ENCODE measurements at regions of chr16 and their contacts with region 1.

Region 1: GRCh38 chr16:57300387-57301125 is 16.1 kb upstream of the PLLP start:
- DNase-seq: peak; percentile 100
- H3K4me3 ChIP-seq: peak overlapping the region; percentile 71
- H3K27ac ChIP-seq: peak overlapping the region; percentile 84
- H3K4me1 ChIP-seq: peaks cover 22% of the 10 kb centered on the region
- CTCF ChIP-seq: peak; percentile 91

Region 2: DNA sequence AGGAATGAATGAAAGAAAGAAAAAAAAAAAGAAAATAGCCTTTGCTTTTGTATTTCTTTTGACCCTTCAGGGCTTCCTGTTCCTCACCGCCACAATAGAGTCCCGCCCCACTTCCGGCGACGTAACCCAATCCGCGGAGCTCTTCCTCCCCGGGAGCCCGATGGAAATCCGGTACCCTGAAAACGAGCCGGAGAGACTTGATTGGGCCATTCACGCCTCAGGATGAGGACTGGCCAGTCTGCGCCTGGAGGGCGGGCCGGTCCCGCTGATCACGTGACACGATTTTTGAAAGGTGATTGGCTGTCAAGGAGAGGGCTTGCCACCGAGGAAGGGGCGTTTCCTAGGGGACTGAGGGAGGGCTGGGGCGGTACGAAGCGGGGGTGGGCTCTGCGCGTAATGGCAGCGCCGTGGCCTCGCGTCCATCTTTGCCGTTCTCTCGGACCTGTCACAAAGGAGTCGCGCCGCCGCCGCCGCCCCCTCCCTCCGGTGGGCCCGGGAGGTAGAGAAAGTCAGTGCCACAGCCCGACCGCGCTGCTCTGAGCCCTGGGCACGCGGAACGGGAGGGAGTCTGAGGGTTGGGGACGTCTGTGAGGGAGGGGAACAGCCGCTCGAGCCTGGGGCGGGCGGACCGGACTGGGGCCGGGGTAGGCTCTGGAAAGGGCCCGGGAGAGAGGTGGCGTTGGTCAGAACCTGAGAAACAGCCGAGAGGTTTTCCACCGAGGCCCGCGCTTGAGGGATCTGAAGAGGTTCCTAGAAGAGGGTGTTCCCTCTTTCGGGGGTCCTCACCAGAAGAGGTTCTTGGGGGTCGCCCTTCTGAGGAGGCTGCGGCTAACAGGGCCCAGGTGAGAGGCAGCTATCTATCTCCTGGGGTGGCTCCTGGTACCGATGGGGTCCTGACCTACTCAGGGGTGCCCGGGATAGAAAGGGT is 114.3 kb before region 1 on chr16 and contains the starts of genes PSME3IP1 and RSPRY1:
- CTCF ChIA-PET with region 1: no interaction called
- POLR2A ChIA-PET with region 1: no interaction called
- intact Hi-C with region 1: loop called (anchors 5 kb)
- DNase-seq: peak; percentile 99
- H3K4me3 ChIP-seq: peak within 1 kb of the TSS; percentile 87
- H3K27ac ChIP-seq: peak within 1 kb of the TSS; percentile 60
- H3K4me1 ChIP-seq: peaks cover 30% of the 10 kb centered on the region
- CTCF ChIP-seq: no peak
- total RNA-seq, gene PSME3IP1: 89.5 and 111 TPM in 2 replicates
- total RNA-seq, gene RSPRY1: 17.1 and 25.6 TPM in 2 replicates

Region 3: DNA sequence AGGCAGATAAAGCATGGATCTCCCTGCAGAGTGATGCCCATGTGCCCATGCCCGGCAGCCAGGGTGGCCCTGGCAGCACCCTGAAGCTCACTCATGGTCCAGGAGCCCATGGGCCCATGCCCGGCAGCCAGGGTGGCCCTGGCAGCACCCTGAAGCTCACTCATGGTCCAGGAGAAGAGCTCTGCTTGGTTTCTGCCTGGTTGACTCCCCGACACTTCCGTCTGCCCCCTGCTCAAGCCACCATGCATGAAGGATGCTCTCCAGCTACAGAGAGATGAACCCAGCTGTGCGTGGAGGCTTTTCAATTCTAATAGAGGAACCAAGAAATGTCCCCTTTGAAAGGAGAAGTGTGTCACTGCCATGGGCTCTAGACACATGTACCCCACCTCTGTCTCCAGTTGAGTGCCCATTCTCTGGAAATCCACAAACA is 112.8 kb after region 1 on chr16:
- CTCF ChIA-PET with region 1: interaction called, 18 read pairs
- POLR2A ChIA-PET with region 1: interaction called, 5 read pairs
- intact Hi-C with region 1: loop called (anchors 1 kb)
- DNase-seq: peak; percentile 94
- H3K4me3 ChIP-seq: peak overlapping the region; percentile 0
- H3K27ac ChIP-seq: peak overlapping the region; percentile 69
- H3K4me1 ChIP-seq: peaks cover 31% of the 10 kb centered on the region
- CTCF ChIP-seq: no peak

Region 4: GRCh38 chr16:57447186-57447962 is 146.8 kb after region 1 on chr16 and contains the starts of genes CIAPIN1 and COQ9:
- CTCF ChIA-PET with region 1: no interaction called
- POLR2A ChIA-PET with region 1: no interaction called
- intact Hi-C with region 1: loop called (anchors 1 kb)
- DNase-seq: peak; percentile 97
- H3K4me3 ChIP-seq: peak within 1 kb of the TSS; percentile 96
- H3K27ac ChIP-seq: peak within 1 kb of the TSS; percentile 51
- H3K4me1 ChIP-seq: peaks cover 17% of the 10 kb centered on the region
- CTCF ChIP-seq: no peak
- total RNA-seq, gene CIAPIN1: 47.7 and 72.1 TPM in 2 replicates
- total RNA-seq, gene COQ9: 30.5 and 31.3 TPM in 2 replicates